Mammary epithelial cell (primary cell): ENCODE measurements at regions of chr11 and their contacts with region 1.

Region 1: GRCh38 chr11:2930704-2931428 is 1.6 kb upstream of the PHLDA2 start:
- DNase-seq: peak; percentile 76
- H3K4me3 ChIP-seq: peak overlapping the region; percentile 59 to 95 (median 70)
- H3K27ac ChIP-seq: peak overlapping the region; percentile 91
- H3K4me1 ChIP-seq: peaks cover 51% of the 10 kb centered on the region
- H3K27me3 ChIP-seq: no peaks in the 10 kb centered on the region
- CTCF ChIP-seq: peak; percentile 77 to 95

Region 2: DNA sequence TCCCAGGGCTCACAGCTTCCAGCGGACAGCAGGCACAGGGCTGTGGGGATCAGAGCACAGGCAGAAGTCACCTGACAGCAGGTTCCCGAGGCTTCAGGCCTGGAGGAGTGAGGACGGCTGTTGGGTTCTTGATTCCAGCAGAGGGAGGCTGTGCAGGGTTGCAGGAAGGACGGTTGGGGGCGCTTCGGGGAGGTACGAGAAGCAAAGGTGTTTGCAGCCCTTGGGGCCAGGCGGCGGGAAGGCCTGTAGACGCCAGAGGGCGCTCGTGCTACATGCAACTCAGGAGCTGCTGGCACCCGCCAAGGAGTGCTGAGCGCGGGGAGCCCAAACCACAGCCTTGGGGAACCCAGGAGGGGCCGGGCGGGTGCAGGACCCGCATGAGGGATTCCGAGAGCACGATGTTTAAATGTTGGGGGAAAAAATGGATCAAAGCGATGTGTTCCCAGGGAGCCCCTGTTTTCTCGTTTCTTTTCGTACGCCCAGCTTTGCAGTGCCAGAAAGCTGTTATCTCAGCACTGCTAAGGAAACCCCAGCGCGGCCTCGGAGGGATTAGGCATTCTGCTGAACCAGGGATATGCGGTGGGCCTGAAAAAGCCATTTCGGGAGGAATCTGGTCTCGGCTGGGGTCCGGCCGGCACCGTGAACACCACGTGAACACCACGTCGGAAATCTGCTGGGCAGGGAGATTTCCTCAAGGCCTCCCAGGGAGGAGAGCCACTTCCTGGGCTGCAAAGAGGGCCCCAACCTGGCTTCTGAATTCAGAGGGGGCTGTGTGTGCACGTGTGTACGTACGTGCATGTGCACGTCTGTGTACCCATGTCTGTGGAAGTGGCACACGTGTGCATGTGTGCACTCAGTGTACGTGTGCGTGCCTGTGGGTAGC is 397.9 kb before region 1 on chr11:
- CTCF ChIA-PET with region 1: no interaction called
- dilution Hi-C with region 1: no loop called
- in situ Hi-C with region 1: no loop called
- intact Hi-C with region 1: loop called (anchors 1 kb)
- DNase-seq: peak; percentile 71
- H3K4me3 ChIP-seq: no peak overlapping the region
- H3K27ac ChIP-seq: no peak overlapping the region
- H3K4me1 ChIP-seq: peaks cover 29% of the 10 kb centered on the region
- H3K27me3 ChIP-seq: no peaks in the 10 kb centered on the region
- CTCF ChIP-seq: peak; percentile 86 to 98

Region 3: GRCh38 chr11:2621894-2622293 is 309.0 kb before region 1 on chr11:
- CTCF ChIA-PET with region 1: no interaction called
- dilution Hi-C with region 1: no loop called
- in situ Hi-C with region 1: no loop called
- intact Hi-C with region 1: no loop called
- DNase-seq: no peak
- H3K4me3 ChIP-seq: no peak overlapping the region
- H3K27ac ChIP-seq: no peak overlapping the region
- H3K4me1 ChIP-seq: no peaks in the 10 kb centered on the region
- H3K27me3 ChIP-seq: no peaks in the 10 kb centered on the region
- CTCF ChIP-seq: no peak

Region 4: DNA sequence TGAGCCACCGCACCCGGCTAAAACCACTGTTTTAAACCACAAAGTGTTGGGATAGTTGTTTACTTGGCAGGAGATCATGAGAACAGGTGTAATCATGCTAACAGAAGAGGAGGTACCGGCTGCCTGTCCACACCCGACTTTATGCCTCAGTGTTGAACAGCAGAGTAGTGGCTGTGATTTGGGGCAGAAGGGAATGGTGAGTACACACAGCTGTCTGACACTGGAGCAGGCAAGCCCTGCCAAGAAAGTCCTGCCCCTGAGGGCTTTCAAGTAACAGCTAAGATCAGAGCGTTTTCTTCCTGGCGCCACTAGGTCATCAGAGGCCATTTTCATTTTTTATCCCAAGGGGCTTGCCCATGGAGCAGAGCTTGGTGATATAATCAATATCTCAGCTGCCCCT is 53.4 kb before region 1 on chr11:
- CTCF ChIA-PET with region 1: no interaction called
- dilution Hi-C with region 1: no loop called
- in situ Hi-C with region 1: no loop called
- intact Hi-C with region 1: no loop called
- DNase-seq: no peak
- H3K4me3 ChIP-seq: no peak overlapping the region
- H3K27ac ChIP-seq: no peak overlapping the region
- H3K4me1 ChIP-seq: no peaks in the 10 kb centered on the region
- H3K27me3 ChIP-seq: peaks cover 3% of the 10 kb centered on the region
- CTCF ChIP-seq: no peak

Region 5: GRCh38 chr11:2892215-2893020 is 38.4 kb before region 1 on chr11:
- CTCF ChIA-PET with region 1: interaction called, 4 read pairs
- dilution Hi-C with region 1: no loop called
- in situ Hi-C with region 1: no loop called
- intact Hi-C with region 1: loop called (anchors 1 kb)
- DNase-seq: no peak
- H3K4me3 ChIP-seq: peak overlapping the region in 2 of 3 experiments; percentile 38 to 48
- H3K27ac ChIP-seq: no peak overlapping the region
- H3K4me1 ChIP-seq: peaks cover 29% of the 10 kb centered on the region
- H3K27me3 ChIP-seq: no peaks in the 10 kb centered on the region
- CTCF ChIP-seq: peak; percentile 68 to 94

Region 6: GRCh38 chr11:2992234-2992996 is 61.5 kb after region 1 on chr11 and contains the start of gene NAP1L4:
- CTCF ChIA-PET with region 1: no interaction called
- dilution Hi-C with region 1: no loop called
- in situ Hi-C with region 1: no loop called
- intact Hi-C with region 1: loop called (anchors 1 kb)
- DNase-seq: peak; percentile 95
- H3K4me3 ChIP-seq: peak within 1 kb of the TSS; percentile 67 to 80 (median 80)
- H3K27ac ChIP-seq: peak within 1 kb of the TSS; percentile 86
- H3K4me1 ChIP-seq: peaks cover 32% of the 10 kb centered on the region
- H3K27me3 ChIP-seq: no peaks in the 10 kb centered on the region
- CTCF ChIP-seq: no peak
- total RNA-seq, gene NAP1L4: 89.2 to 153 TPM

Region 7: GRCh38 chr11:3049430-3050243 is 118.8 kb after region 1 on chr11:
- CTCF ChIA-PET with region 1: interaction called, 14 read pairs
- dilution Hi-C with region 1: no loop called
- in situ Hi-C with region 1: no loop called
- intact Hi-C with region 1: no loop called
- DNase-seq: peak; percentile 88
- H3K4me3 ChIP-seq: no peak overlapping the region
- H3K27ac ChIP-seq: peak overlapping the region; percentile 46
- H3K4me1 ChIP-seq: peaks cover 14% of the 10 kb centered on the region
- H3K27me3 ChIP-seq: no peaks in the 10 kb centered on the region
- CTCF ChIP-seq: peak; percentile 34 to 59